ENCODE measurements at regions of chr12 and their contacts with region 1.

Region 1: DNA sequence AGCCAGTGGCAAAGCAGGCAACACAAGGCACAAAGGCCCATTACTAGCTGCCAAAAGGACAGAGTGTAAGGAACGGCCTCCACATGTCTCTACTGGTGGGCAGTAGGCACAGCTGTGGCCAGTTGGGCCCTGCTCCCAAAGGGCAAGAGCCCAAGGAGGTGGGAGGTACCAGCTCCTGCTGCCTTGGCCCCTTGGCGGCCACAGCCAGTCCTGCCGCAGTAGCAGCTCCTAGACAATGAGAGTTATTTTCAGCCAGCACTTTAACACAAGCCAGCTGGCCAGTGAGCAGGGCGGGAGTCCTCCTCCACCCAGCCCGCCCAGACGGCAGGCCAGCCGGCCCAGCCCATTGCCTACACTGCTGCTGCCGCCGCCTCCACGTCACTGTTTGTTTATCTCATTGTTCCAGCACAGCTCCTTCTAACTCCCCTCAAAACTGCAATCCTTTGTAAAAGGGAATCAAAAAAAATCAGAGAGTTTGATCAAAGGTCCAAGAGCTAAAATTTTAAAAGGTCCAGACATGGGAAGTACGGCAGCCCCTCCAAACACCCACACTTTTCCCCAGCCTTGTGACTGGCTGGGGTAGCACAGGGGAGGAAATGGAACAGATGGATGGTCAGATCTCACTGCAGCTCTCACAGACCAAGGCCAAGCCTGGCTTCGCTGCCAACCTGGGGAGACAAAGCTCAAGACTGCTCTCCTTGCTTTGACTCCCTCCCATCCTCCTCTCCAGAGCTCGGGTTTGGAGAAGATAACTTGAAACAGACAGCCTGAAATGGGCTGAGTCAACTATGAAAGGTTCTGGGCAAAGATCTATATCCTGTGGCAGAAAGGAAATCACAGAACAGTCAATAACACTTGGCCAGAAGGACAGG is 33.5 kb downstream of the FMNL3 start:
- DNase-seq: peak; percentile 81 to 93
- H3K4me3 ChIP-seq: peak overlapping the region in 1 of 3 donors; percentile 31
- H3K27ac ChIP-seq: peak overlapping the region; percentile 91 to 94
- H3K4me1 ChIP-seq: peaks cover 0 to 31% of the 10 kb centered on the region in 2 donors
- H3K27me3 ChIP-seq: no peaks in the 10 kb centered on the region
- CTCF ChIP-seq: peak in 2 of 3 donors; percentile 67 to 75
- POLR2A ChIP-seq: no peak

Region 2: GRCh38 chr12:49538510-49539403 is 134.9 kb before region 1 on chr12 and contains the start of gene KCNH3:
- intact Hi-C with region 1: no loop called
- DNase-seq: peak; percentile 68 to 71
- H3K4me3 ChIP-seq: peak within 1 kb of the TSS; percentile 42 to 73 (median 56)
- H3K27ac ChIP-seq: no peak within 1 kb of the TSS
- H3K4me1 ChIP-seq: peaks cover 0 to 11% of the 10 kb centered on the region in 2 donors
- H3K27me3 ChIP-seq: peaks cover 2 to 12% of the 10 kb centered on the region in 2 donors
- CTCF ChIP-seq: no peak
- POLR2A ChIP-seq: no peak
- total RNA-seq, gene KCNH3: 0.66 to 1.3 TPM in 2 of 3 donors, not detected in the other

Region 3: DNA sequence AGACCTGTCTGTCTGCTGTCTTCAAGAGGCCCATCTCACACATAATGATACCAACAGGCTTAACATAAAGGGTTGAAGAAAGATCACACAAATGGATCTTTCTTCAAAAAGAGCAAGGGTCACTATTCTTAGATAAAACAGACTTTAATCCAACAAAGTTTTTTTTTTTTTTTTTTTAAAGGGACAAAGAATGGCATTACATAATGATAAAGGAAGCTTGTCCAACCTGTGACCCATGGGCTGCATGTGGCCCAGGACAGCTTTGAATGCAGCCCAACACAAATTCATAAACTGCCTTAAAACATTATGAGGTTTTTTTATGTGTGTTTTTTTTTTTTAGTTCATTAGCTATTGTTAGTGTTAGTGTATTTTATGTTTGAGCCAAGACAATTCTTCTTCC is 61.5 kb before region 1 on chr12:
- intact Hi-C with region 1: loop called (anchors 2 kb)
- DNase-seq: no peak
- H3K4me3 ChIP-seq: no peak overlapping the region
- H3K27ac ChIP-seq: no peak overlapping the region
- H3K4me1 ChIP-seq: no peaks in the 10 kb centered on the region
- H3K27me3 ChIP-seq: no peaks in the 10 kb centered on the region
- CTCF ChIP-seq: no peak
- POLR2A ChIP-seq: no peak

Region 4: GRCh38 chr12:49636979-49637755 is 36.5 kb before region 1 on chr12:
- intact Hi-C with region 1: no loop called
- DNase-seq: peak in 1 of 2 donors; percentile 41
- H3K4me3 ChIP-seq: no peak overlapping the region
- H3K27ac ChIP-seq: peak overlapping the region in 1 of 2 donors; percentile 27
- H3K4me1 ChIP-seq: no peaks in the 10 kb centered on the region
- H3K27me3 ChIP-seq: no peaks in the 10 kb centered on the region
- CTCF ChIP-seq: peak; percentile 25 to 54 (median 47)
- POLR2A ChIP-seq: no peak